ENCODE measurements at regions of chr5 and their contacts with region 1.

Region 1: DNA sequence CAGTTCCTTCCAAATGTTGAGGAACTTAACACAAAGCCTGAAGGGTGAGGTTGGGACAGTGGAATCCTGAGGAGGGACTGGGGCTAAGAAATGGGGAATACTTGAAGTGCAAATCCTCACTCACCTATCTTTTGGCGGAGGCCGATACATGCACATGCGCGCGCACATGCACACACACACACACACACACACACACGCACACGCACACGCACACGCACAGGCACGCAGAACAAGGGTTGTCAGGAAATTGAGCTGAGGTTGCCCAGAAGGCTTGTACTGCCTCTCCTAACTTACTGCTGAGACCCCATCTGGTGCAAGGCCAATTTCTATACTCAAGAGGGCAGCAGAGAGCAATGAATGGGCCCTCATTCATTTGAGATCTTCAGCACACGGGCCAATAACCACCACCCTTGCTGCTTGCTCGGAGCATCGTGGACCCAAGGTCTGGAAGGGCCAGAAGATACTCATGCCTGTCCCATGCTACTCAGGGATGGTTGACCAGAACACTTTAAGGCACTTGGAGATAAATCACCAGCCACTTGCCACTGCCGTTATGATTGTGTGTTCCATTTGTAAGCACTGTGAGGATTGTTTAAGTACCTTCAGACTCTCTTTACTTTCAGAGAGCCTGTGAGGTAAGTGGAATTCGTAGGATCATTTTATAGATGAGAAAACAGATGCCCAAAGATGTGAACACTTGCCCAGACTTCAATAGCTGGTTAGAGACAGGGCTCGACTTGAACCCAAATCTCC is 21.5 kb downstream of the BTF3 start:
- H3K4me3 ChIP-seq: no peak overlapping the region
- H3K27ac ChIP-seq: no peak overlapping the region
- H3K4me1 ChIP-seq: no peaks in the 10 kb centered on the region
- CTCF ChIP-seq: peak; percentile 92

Region 2: GRCh38 chr5:73160239-73160671 is 359.5 kb before region 1 on chr5:
- CTCF ChIA-PET with region 1: no interaction called
- POLR2A ChIA-PET with region 1: no interaction called
- H3K4me3 ChIP-seq: no peak overlapping the region
- H3K27ac ChIP-seq: no peak overlapping the region
- H3K4me1 ChIP-seq: no peaks in the 10 kb centered on the region
- CTCF ChIP-seq: no peak

Region 3: DNA sequence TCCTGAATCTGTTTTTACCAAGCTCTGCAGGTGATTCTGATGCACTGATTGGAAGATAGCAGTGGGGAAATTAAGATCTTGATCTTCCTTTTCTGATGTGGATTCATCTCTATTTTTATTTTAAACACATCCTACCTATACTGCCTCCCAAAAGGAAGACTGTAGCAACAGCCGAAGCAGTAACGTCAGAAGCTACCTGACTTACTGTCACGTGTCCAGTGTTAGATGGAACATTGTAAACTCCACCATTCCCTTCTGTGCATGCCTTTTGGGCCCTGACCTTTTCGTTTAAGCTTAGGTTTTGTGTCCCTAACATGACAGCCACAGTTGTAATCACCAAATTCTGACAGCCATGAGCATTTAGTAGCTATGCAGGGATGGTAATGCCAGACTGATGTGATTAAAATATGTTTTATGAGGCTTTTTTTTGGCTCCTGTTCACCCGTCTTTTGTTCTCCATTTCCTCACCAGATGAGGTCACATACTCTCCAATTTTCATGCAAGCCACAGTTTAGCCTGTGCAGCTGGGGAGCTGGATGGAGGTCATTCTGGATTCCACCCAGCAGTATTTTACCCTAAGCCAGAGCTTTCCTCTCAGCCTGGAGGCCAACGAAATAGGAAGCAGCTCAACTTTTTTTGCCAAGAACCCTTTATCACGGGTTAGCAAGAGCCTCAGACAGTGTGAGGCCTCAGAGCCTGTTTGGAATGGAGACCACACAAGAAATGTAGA is 55.5 kb before region 1 on chr5:
- CTCF ChIA-PET with region 1: no interaction called
- POLR2A ChIA-PET with region 1: no interaction called
- H3K4me3 ChIP-seq: no peak overlapping the region
- H3K27ac ChIP-seq: no peak overlapping the region
- H3K4me1 ChIP-seq: no peaks in the 10 kb centered on the region
- CTCF ChIP-seq: no peak

Region 4: GRCh38 chr5:73507062-73507461 is 12.6 kb before region 1 on chr5:
- CTCF ChIA-PET with region 1: interaction called, 17 read pairs
- POLR2A ChIA-PET with region 1: no interaction called
- H3K4me3 ChIP-seq: no peak overlapping the region
- H3K27ac ChIP-seq: no peak overlapping the region
- H3K4me1 ChIP-seq: no peaks in the 10 kb centered on the region
- CTCF ChIP-seq: no peak

Region 5: GRCh38 chr5:73534011-73534644 is 14.4 kb after region 1 on chr5:
- CTCF ChIA-PET with region 1: interaction called, 75 read pairs
- POLR2A ChIA-PET with region 1: no interaction called
- H3K4me3 ChIP-seq: no peak overlapping the region
- H3K27ac ChIP-seq: no peak overlapping the region
- H3K4me1 ChIP-seq: no peaks in the 10 kb centered on the region
- CTCF ChIP-seq: no peak

Region 6: GRCh38 chr5:73540192-73540591 is 20.5 kb after region 1 on chr5:
- CTCF ChIA-PET with region 1: interaction called, 75 read pairs
- POLR2A ChIA-PET with region 1: no interaction called
- H3K4me3 ChIP-seq: no peak overlapping the region
- H3K27ac ChIP-seq: no peak overlapping the region
- H3K4me1 ChIP-seq: no peaks in the 10 kb centered on the region
- CTCF ChIP-seq: no peak

Measured in HEK293 (cell line).